Right ventricle myocardium superior (tissue), 1 donor: ENCODE measurements at regions of chr10 and their contacts with region 1.

Region 1: DNA sequence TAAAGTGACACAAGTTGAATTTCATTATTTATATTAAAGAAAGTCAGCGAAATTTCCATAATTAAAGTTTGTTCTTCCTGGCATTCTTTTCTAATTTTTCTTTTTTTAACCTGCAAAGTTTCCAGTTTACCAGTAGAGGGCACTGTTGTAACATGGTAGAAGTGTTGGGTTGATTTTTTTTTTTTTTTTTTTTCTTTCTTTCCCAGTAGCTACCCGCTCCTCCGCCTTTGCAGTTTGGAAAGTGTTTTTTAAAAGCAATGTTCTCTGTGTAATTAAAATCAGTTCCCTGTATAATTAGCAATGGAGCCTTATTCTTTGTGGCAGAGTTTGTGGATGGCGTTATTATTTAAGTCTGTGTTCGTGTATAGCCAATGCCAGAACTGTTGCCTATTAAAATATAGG is 53.7 kb downstream of the TAF3 start:
- DNase-seq: no peak
- ATAC-seq: peak; percentile 38

Region 2: GRCh38 chr10:7818295-7819122 is 53.5 kb before region 1 on chr10 and contains the start of gene TAF3:
- intact Hi-C with region 1: no loop called
- DNase-seq: peak; percentile 95
- ATAC-seq: peak; percentile 96
- total RNA-seq, gene TAF3: 10.4 TPM

Region 3: GRCh38 chr10:9209105-9209798 is 1337.2 kb after region 1 on chr10:
- intact Hi-C with region 1: loop called (anchors 1 kb)
- DNase-seq: peak; percentile 56
- ATAC-seq: no peak

Region 4: DNA sequence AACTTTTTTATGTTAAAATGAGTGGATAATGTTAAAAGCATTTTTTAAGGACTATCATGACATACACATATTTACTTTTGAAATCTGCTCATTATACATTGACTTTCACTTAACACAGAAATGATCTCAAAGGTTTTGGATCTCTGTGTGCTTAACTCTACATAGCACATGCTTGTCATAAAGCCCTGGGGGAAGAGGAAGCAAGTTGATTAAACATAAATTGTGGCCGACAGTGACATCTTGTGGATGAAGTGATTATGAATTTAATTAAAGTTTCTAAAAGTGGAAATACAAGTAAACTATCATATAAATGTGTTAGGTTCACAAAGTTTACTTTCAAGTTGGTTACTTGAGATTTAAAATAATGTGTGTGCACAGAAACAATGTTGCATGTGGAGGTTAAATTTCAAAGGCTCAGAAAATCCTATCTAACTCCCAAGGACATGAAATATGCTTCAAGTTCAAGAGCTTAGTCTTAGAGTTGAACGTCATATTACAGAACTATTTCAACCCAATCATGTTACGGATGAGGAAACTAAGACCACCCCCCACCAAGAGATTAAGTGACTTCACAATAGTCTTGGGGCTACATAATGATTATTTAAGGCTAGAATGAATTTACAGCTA is 1430.2 kb after region 1 on chr10:
- intact Hi-C with region 1: loop called (anchors 10 kb)
- DNase-seq: no peak
- ATAC-seq: no peak